Vagina (tissue), 2 donors: ENCODE measurements at regions of chr14 and their contacts with region 1.

Region 1: DNA sequence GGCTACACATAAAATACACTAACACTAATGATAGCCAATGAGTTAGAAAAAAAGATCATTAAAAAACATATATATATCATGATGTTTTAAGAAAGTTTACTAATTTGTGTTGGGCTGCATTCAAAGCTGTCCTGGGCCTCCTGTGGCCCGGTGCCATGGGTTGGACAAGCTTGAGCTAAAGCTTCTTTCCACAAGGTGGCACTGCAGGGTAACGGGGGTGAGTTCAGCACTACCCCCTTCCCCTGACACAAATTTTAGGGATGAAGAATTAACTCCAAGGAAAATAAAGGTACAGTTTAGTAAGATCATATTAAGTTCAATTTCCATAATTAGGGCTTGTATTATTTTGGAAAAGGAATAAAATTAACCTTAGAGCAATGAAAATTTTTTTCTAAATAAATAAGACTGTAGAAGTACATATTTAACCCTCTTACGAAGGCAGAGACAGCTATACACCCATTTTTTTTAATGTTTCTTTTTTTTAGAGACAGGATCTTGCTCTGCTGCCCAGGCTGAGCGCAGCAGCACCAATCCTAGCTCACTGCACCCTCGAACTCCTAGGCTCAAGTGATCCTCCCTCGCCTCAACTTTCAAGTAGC is 38.9 kb downstream of the PPP1R13B start:
- DNase-seq: no peak
- H3K4me3 ChIP-seq: no peak overlapping the region
- H3K27ac ChIP-seq: no peak overlapping the region
- H3K4me1 ChIP-seq: no peaks in the 10 kb centered on the region
- H3K27me3 ChIP-seq: no peaks in the 10 kb centered on the region
- CTCF ChIP-seq: peak; percentile 66 to 81 (median 80)
- POLR2A ChIP-seq: no peak

Region 2: DNA sequence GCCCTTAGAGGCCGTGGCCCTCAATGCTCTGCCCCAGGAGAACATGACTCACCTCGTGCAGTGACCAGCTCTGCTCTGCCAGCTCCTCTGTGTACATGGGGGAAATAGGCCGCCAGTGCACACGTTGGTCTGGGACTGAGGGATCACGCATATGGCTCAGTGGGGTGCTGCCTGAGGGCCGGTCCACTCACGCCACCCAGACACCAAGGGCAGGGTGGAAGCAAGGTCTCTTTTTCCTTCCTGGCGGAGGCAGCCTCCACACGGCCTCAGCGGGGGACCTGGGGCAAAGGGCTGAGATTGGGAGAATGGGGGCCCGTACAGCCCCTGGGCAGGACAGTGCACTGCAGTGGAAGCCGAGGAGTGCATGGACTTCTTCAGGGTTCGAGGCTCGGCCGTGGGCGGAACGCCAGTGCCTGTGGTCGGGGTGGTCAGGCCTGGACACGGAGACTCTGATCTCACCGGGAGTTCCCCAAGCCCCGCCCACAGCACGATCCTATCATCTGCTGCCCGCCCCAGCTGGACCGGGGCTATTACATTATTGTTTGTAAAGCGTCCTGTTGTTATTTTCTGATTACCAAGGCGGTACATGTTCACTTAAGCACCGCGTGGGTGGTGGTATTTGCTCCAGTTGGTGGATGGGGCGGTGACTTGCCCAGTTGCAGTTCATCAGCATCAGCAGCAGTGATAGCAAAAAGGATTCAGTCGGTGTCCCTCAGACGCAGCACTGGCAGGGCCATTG is 81.0 kb after region 1 on chr14:
- intact Hi-C with region 1: loop called (anchors 10 kb)
- DNase-seq: no peak
- H3K4me3 ChIP-seq: no peak overlapping the region
- H3K27ac ChIP-seq: no peak overlapping the region
- H3K4me1 ChIP-seq: peaks cover 4% of the 10 kb centered on the region
- H3K27me3 ChIP-seq: no peaks in the 10 kb centered on the region
- CTCF ChIP-seq: no peak
- POLR2A ChIP-seq: no peak

Region 3: GRCh38 chr14:103910262-103910935 is 101.9 kb after region 1 on chr14:
- intact Hi-C with region 1: loop called (anchors 5 kb)
- DNase-seq: no peak
- H3K4me3 ChIP-seq: no peak overlapping the region
- H3K27ac ChIP-seq: no peak overlapping the region
- H3K4me1 ChIP-seq: peaks cover 9% of the 10 kb centered on the region
- H3K27me3 ChIP-seq: no peaks in the 10 kb centered on the region
- CTCF ChIP-seq: peak; percentile 45 to 74 (median 62)
- POLR2A ChIP-seq: no peak

Region 4: GRCh38 chr14:103973354-103973753 is 164.9 kb after region 1 on chr14:
- intact Hi-C with region 1: loop called (anchors 10 kb)
- DNase-seq: no peak
- H3K4me3 ChIP-seq: no peak overlapping the region
- H3K27ac ChIP-seq: no peak overlapping the region
- H3K4me1 ChIP-seq: no peaks in the 10 kb centered on the region
- H3K27me3 ChIP-seq: no peaks in the 10 kb centered on the region
- CTCF ChIP-seq: no peak
- POLR2A ChIP-seq: no peak